ENCODE measurements at regions of chr12 and their contacts with region 1.

Region 1: DNA sequence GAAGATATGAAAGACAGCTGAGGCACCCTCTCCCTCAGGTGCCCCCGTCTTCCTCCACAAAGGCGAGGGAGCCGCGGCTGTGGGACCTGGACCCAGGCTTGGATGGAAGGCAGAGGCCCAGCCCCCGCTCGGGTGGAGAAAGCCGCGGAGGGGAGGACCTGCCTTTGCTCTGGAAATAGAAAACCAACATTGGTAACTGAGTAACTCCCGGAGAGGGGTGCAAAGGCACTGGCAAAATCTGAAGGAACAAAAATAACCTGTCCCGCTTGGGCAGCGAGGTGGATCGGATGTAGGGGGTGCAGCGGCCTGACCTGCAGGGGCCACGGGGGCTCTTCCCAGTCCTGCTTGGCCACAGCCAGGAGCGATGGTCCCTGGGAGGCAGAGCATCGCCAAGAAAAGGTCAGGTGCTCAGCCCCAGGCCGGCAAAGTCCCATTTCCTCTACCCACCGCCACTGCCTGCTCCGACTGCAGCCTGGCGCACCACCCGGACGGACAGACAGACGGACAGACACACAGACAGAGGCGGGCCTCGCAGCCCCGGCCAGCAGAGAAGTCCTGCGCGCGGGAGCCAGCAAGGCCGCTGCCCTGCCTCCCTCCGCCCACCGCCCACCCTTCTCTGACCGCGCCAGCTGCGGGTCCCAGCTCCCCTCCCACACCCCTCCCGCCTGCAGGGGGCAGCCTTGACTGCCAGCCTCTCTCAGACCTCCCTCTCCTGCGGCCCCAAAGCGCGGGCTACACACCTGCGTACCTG is 21.4 kb upstream of the TMEM106C start:
- DNase-seq: no peak
- H3K4me3 ChIP-seq: no peak overlapping the region
- H3K27ac ChIP-seq: no peak overlapping the region
- H3K4me1 ChIP-seq: peaks cover 0 to 19% (median 4%) of the 10 kb centered on the region in 3 donors
- H3K27me3 ChIP-seq: peaks cover 0 to 32% (median under 1%) of the 10 kb centered on the region in 4 donors
- CTCF ChIP-seq: peak in 1 of 6 experiments; percentile 21
- POLR2A ChIP-seq: no peak

Region 2: DNA sequence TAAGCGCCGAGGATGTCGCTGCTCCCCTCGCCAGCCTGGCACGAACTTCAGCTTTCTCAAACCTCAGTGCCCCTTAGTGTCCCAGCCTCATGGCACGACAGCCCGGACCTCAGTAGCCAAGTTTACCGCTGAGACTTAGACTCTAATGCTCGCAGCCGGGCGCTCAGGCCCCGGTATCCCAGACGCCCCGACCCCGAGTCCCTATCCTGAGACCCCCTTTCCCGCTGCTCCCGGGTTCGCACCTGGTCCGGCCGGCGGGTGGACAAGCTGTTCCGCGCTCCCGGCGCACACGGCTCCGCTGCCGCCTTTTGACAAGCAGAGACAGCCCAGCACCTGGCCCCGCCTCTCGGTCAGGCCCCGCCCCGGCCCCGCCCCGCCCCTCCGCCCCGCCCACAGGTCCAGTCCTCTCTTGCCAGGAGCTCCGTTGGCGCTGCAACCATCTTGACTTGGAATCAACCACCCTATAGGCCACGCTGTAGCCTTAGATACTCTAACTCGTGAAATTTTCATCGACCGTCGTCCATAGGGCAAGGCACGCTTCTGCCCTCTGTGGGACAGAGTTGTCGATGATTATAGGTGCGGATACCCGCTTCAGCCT is 37.2 kb before region 1 on chr12 and contains the start of gene VDR:
- intact Hi-C with region 1: loop called (anchors 5 kb)
- DNase-seq: no peak
- H3K4me3 ChIP-seq: peak within 1 kb of the TSS; percentile 53 to 81 (median 65)
- H3K27ac ChIP-seq: peak within 1 kb of the TSS; percentile 78 to 92 (median 84)
- H3K4me1 ChIP-seq: peaks cover 42 to 60% (median 46%) of the 10 kb centered on the region in 3 donors
- H3K27me3 ChIP-seq: no peaks in the 10 kb centered on the region
- CTCF ChIP-seq: peak in 2 of 6 experiments; percentile 5 to 13
- POLR2A ChIP-seq: peak in 2 of 4 donors; percentile 34 to 82
- total RNA-seq, gene VDR: 16.6 to 25.0 (median 21.3) TPM

Measured in esophagus squamous epithelium (tissue), 5 donors.